Tibial artery (tissue), 4 donors: ENCODE measurements at regions of chr1 and their contacts with region 1.

Region 1: DNA sequence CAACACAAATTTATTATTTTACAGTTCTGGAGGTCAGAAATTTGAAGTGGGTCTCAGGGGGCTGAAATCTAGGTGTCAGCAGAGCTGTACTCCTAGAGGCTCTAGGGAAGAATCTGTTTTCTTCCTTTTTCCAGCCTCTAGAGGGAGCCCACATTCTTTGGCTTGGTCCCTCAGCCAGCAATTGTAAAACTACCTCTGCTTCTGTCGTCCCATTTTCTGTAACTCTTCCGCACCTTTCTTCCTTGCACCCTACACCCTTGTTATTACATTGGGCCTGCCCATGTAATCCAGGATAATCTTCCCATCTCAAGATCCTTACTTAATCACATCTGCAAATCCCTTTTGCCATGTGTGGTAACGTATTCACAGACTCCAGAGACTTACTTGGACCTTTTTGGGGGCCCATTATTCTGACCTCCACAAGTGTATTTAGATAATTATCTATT is 24.8 kb upstream of the THEM4 start:
- DNase-seq: no peak
- H3K4me3 ChIP-seq: no peak overlapping the region
- H3K27ac ChIP-seq: no peak overlapping the region
- H3K4me1 ChIP-seq: no peaks in the 10 kb centered on the region
- H3K27me3 ChIP-seq: no peaks in the 10 kb centered on the region
- CTCF ChIP-seq: peak; percentile 83

Region 2: DNA sequence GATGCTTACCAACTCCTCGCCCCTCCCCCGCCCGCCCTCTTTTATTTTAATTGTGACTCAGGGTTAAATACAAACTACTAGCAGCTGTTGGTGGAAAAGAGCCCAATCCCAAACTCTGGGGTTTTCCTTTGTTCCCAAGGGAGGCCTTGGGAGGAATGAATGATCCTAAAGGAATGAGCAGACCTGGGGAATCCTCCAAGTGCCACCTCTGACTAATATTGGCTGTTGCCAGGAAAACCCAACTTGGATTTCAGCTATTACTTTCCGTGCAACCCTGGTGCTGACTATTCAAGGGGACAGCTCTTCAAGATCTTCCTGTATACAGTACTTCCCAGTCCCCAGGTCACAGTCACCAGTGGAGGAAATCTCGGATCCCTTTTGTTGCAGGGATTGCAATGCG is 60.9 kb after region 1 on chr1:
- intact Hi-C with region 1: loop called (anchors 5 kb)
- DNase-seq: peak; percentile 45 to 74
- H3K4me3 ChIP-seq: no peak overlapping the region
- H3K27ac ChIP-seq: peak overlapping the region in 1 of 2 donors; percentile 80
- H3K4me1 ChIP-seq: peaks cover 4 to 50% (median 32%) of the 10 kb centered on the region in 4 donors
- H3K27me3 ChIP-seq: no peaks in the 10 kb centered on the region
- CTCF ChIP-seq: no peak